ENCODE measurements at regions of chr5 and their contacts with region 1.

Region 1: DNA sequence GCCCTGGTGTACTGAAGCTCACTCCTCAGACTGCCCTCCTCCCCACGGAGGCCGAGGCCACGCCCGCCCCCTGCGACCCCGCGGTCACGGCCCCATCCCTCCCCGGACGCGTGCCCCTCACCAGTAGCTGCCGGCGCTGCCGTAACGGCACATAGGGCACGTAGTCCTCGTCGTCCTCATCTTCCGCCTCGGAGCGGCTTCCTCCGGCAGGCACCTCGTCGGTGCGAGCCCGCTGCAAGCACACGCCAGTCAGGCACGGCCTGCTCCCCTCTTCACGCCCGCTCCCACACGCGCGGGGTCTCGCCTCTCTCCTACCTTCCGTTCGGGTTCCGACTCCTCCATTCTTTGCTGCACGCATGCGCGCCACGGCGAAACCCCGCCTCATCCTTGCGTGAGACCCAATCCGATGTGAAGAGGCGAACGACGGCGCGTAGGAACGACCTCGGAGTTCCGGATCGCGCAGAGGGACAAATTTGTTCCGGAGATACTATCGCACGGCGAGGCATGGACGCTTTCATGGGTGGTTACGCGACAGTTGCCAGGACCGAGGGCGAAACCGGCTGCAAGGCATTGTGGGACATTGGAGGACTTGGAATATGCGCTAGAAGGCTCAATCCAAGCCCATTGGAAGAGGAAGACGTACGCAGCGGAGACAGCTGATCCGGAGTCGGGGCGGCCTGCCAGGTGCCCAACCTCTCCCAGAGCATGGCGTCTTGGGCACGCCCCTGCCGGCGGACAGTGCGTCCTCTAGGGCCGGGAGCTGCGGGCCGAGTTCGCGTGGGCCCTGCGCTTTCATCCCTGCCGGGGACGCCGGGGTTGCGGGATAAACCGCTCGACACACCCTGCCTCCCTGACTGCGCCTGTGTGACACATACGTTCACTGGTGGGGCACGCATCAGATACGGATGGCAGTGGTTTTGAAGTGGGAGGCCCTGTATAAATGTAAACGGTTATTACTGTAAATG is at the start of gene DDX41:
- DNase-seq: peak; percentile 97
- H3K4me3 Mint-ChIP-seq: peak within 1 kb of the TSS; percentile 87
- H3K27ac Mint-ChIP-seq: peak within 1 kb of the TSS; percentile 80
- H3K4me1 Mint-ChIP-seq: peaks cover 27% of the 10 kb centered on the region
- H3K27me3 Mint-ChIP-seq: no peaks in the 10 kb centered on the region
- total RNA-seq, gene DDX41: 138 and 144 TPM in 2 replicates

Region 2: DNA sequence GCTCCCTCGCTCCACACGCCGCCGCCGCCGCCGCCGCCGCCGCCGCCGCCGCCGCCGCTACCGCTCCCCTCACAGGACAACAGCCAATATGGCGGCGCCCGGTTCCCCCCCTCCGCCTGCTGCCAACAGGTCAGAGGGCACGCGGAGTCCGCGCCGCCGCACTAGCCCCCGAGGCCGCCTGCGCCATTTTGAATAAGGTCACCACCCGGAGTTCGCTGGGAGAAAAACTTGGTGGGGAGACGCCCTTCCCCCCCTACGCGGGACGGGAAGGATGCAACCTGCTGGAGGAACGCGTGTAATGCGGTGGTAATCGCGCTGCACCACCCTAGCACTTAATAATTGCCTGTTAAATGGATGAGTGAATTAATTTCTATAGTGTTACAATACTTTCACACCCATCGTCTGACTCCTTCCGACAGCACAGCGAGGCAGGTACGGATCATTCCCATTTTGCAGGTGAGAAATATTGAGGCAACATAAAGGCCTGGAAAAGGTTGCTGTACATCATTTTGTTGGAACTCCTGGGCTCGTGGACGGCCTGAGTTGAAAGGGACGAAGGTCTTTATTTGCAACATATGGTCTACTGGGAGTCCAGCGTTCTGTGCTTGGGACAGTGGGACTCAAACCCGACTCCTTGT is 37.7 kb after region 1 on chr5 and contains the start of gene FAM193B:
- intact Hi-C with region 1: loop called (anchors 2 kb)
- DNase-seq: peak; percentile 94
- H3K4me3 Mint-ChIP-seq: peak within 1 kb of the TSS; percentile 82
- H3K27ac Mint-ChIP-seq: peak within 1 kb of the TSS; percentile 58
- H3K4me1 Mint-ChIP-seq: peaks cover 32% of the 10 kb centered on the region
- H3K27me3 Mint-ChIP-seq: no peaks in the 10 kb centered on the region
- total RNA-seq, gene FAM193B: 75.8 and 81.0 TPM in 2 replicates

Region 3: DNA sequence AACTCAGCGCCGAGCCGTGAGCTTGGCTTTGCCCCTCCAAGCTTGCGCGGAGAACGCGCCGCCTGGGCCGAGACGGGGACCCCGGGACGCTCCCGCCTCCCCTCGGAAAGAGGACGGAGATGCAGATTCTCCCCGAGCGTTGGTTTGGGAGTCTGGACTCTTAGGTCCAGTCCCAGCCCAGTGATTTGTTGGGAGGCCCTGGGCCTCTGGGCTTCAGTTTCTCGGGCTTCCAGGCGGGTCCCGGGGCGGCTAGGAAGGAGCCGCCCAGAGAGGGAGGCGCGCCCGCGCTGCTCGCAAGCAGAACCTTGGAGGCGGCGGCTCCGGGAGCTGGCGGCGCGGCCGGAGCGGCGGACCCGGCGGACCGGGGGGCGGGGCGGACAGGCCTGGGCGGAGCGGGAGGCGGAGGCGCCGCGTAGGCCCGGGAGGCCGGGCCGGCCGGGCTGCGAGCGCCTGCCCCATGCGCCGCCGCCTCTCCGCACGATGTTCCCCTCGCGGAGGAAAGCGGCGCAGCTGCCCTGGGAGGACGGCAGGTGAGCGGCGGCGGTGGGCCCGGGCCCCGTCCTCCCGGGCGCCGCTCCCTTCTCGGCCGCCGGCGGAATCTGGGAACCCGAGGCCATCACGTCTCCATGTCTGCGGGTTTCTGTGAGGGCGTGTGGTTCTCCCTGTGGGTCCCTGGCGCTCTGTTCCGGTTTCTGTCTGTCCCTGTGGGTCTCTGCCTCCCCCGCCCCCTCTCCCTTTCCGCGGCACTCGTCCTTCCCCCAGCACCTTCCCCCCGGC is 83.0 kb after region 1 on chr5 and contains the start of gene B4GALT7:
- intact Hi-C with region 1: loop called (anchors 2 kb)
- DNase-seq: peak; percentile 79
- H3K4me3 Mint-ChIP-seq: peak within 1 kb of the TSS; percentile 92
- H3K27ac Mint-ChIP-seq: peak within 1 kb of the TSS; percentile 83
- H3K4me1 Mint-ChIP-seq: peaks cover 14% of the 10 kb centered on the region
- H3K27me3 Mint-ChIP-seq: no peaks in the 10 kb centered on the region
- total RNA-seq, gene B4GALT7: 20.9 and 22.1 TPM in 2 replicates

Measured in activated T-helper 2 cell treated with anti-CD3 and anti-CD28 coated beads, Interferon-gamma antibody, Interleukin-2, Interleukin-4, amounts not matched to agents 10 μg/mL and 5 μg/mL and 100 μg/mL, durations not matched to agents 14 hours and 24 hours and 36 hours (primary cell).